Esophagus muscularis mucosa (tissue), 4 donors: ENCODE measurements at regions of chr2 and their contacts with region 1.

Region 1: DNA sequence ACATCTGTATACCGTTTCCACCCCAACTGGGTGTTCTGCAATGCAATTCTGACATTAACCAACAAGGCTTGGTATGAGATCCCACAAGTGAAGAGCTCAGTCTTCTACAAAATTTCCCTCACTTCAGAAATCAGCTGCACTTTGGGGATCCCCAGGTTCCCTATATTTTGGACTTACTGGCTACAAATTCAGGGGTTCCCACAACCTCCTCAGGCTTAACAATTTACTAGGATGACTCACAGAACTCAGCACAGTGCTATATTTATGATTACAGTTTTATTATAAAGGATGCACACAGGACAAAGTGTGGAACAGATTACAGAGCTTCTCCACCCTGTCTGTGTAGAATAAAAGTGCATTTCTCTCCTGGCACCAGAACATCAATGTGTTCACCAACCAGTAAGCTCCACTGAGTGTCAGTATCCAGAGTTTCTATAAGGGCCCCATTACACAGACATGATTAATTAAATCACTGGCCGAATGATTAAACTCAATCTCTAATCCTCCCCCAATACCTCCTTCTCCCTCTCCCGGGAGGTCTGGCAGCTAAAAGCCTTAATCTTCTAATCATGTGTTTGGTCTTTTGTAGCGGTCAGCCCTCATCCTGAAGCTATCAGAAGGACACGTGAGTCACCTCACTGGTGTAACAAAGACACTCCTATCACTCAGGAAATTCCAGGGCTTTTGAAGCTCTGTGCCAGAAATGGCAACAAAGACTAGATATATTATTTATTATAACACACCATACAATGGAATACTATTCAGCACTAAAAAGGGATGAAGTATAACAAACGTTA is 84.6 kb downstream of the SLC66A3 start:
- DNase-seq: no peak
- H3K4me3 ChIP-seq: no peak overlapping the region
- H3K27ac ChIP-seq: no peak overlapping the region
- H3K4me1 ChIP-seq: peaks cover 14 to 26% (median 18%) of the 10 kb centered on the region in 4 donors
- H3K27me3 ChIP-seq: no peaks in the 10 kb centered on the region
- CTCF ChIP-seq: no peak
- EP300 ChIP-seq: no peak
- POLR2A ChIP-seq: no peak

Region 2: DNA sequence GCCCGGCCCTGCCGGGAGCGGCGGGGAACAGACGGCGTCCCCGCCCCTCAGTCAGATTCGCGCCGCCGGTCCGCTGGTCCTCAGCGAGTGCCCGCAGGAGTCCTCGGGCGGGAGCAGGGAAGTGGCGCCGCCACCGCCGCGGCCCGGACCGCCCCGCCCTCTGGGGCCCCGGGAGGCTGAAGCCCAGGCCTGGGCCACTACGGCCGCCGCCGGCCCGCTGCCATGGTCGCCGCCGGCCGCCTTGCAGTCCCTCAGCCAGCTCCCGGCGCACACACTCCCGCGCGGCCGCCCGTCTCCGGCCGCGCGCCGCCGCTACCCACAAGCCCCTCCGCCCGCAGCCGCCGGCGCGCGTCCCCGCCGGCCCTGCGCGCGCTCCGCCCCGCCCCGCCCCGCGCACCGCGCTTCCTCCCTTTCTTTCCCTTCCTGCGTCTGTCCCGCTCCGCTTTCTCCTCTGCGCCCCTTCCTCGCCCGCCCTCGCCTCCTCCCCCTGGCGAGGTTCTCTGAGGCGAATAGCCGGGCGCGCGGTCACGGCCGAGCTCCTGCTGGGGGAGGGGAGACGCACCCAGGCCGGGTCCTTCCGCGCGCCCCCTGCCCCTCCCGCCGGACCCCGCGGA is 104.6 kb after region 1 on chr2 and contains the start of gene ROCK2:
- intact Hi-C with region 1: loop called (anchors 5 kb)
- DNase-seq: peak; percentile 95
- H3K4me3 ChIP-seq: peak within 1 kb of the TSS; percentile 80 to 95 (median 91)
- H3K27ac ChIP-seq: peak within 1 kb of the TSS; percentile 98 to 100 (median 99)
- H3K4me1 ChIP-seq: peaks cover 19 to 52% (median 48%) of the 10 kb centered on the region in 4 donors
- H3K27me3 ChIP-seq: peaks cover 0 to 3% (median 0%) of the 10 kb centered on the region in 4 donors
- CTCF ChIP-seq: no peak
- EP300 ChIP-seq: no peak
- POLR2A ChIP-seq: peak; percentile 26
- total RNA-seq, gene ROCK2: 90.0 to 119 (median 101) TPM